Tibial artery (tissue), 4 donors: ENCODE measurements at regions of chr17 and their contacts with region 1.

Region 1: GRCh38 chr17:78421484-78422266 is 43.2 kb downstream of the PGS1 start:
- DNase-seq: peak; percentile 76 to 82
- H3K4me3 ChIP-seq: no peak overlapping the region
- H3K27ac ChIP-seq: no peak overlapping the region
- H3K4me1 ChIP-seq: peaks cover 0 to 14% (median 8%) of the 10 kb centered on the region in 4 donors
- H3K27me3 ChIP-seq: no peaks in the 10 kb centered on the region
- CTCF ChIP-seq: peak; percentile 98 to 99

Region 2: GRCh38 chr17:78250891-78251794 is 170.5 kb before region 1 on chr17:
- intact Hi-C with region 1: loop called (anchors 10 kb)
- DNase-seq: peak; percentile 67 to 84
- H3K4me3 ChIP-seq: no peak overlapping the region
- H3K27ac ChIP-seq: no peak overlapping the region
- H3K4me1 ChIP-seq: peaks cover 0 to 15% (median 7%) of the 10 kb centered on the region in 4 donors
- H3K27me3 ChIP-seq: peaks cover 0 to 19% of the 10 kb centered on the region in 2 donors
- CTCF ChIP-seq: peak; percentile 97 to 98

Region 3: GRCh38 chr17:78289802-78290363 is 131.8 kb before region 1 on chr17:
- intact Hi-C with region 1: loop called (anchors 1 kb)
- DNase-seq: peak; percentile 71 to 83
- H3K4me3 ChIP-seq: no peak overlapping the region
- H3K27ac ChIP-seq: no peak overlapping the region
- H3K4me1 ChIP-seq: peaks cover 0 to 3% (median 0%) of the 10 kb centered on the region in 4 donors
- H3K27me3 ChIP-seq: no peaks in the 10 kb centered on the region
- CTCF ChIP-seq: peak; percentile 79 to 85

Region 4: GRCh38 chr17:78360371-78361224 is 61.1 kb before region 1 on chr17:
- intact Hi-C with region 1: loop called (anchors 2 kb)
- DNase-seq: peak; percentile 91 to 94
- H3K4me3 ChIP-seq: peak overlapping the region; percentile 63 to 74
- H3K27ac ChIP-seq: peak overlapping the region; percentile 89 to 90
- H3K4me1 ChIP-seq: peaks cover 0 to 58% (median 44%) of the 10 kb centered on the region in 4 donors
- H3K27me3 ChIP-seq: no peaks in the 10 kb centered on the region
- CTCF ChIP-seq: peak; percentile 89 to 91

Region 5: GRCh38 chr17:78708510-78708973 is 286.9 kb after region 1 on chr17:
- intact Hi-C with region 1: no loop called
- DNase-seq: peak; percentile 58 to 76
- H3K4me3 ChIP-seq: no peak overlapping the region
- H3K27ac ChIP-seq: no peak overlapping the region
- H3K4me1 ChIP-seq: no peaks in the 10 kb centered on the region
- H3K27me3 ChIP-seq: no peaks in the 10 kb centered on the region
- CTCF ChIP-seq: peak; percentile 83